RWPE1 (cell line): ENCODE measurements at regions of chr10 and their contacts with region 1.

Region 1: GRCh38 chr10:88386821-88387773 is 196.0 kb downstream of the RNLS start:
- DNase-seq: peak; percentile 60
- H3K27ac ChIP-seq: no peak overlapping the region
- CTCF ChIP-seq: no peak

Region 2: GRCh38 chr10:87861953-87862678 is 525.0 kb before region 1 on chr10:
- CTCF ChIA-PET with region 1: interaction called, 37 read pairs
- POLR2A ChIA-PET with region 1: interaction called, 16 read pairs
- DNase-seq: peak; percentile 87
- H3K27ac ChIP-seq: peak overlapping the region; percentile 98
- CTCF ChIP-seq: no peak

Region 3: DNA sequence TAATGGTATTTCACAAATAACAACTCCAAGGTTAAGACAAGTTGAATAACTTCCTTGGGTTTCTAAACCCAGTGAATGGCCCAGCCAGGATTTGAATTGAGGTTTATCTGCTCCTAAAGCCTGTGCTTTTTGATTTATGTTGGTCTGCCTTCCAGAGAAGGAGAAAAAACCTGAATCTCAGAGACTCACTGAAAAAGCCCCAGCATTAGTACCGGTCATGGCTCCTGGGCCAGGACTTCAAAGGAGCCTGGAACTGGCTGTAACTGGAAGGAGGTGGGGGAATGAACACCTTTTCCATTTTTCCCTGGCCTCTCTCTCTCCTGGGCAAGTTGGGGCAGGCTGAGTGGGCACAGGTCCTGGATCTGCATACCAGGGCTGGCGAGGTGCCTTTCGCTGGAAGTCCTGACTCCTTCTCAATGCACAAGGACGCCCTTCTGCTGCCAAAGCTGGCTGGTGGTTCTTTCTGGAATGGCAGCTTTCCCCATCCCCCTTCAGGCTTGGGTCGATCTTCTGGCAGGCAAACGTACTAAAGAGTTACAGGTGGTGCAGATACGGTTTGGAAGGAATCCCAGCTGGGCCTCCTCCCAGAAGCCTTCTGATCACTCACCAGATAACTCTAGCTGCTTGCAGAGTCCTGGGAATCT is 255.5 kb before region 1 on chr10:
- CTCF ChIA-PET with region 1: interaction called, 11 read pairs
- POLR2A ChIA-PET with region 1: no interaction called
- DNase-seq: peak; percentile 91
- H3K27ac ChIP-seq: peak overlapping the region; percentile 86
- CTCF ChIP-seq: peak; percentile 65

Region 4: GRCh38 chr10:88372051-88372715 is 14.9 kb before region 1 on chr10:
- CTCF ChIA-PET with region 1: no interaction called
- POLR2A ChIA-PET with region 1: no interaction called
- DNase-seq: no peak
- H3K27ac ChIP-seq: no peak overlapping the region
- CTCF ChIP-seq: no peak